ENCODE measurements at regions of chr2 and their contacts with region 1.

Region 1: DNA sequence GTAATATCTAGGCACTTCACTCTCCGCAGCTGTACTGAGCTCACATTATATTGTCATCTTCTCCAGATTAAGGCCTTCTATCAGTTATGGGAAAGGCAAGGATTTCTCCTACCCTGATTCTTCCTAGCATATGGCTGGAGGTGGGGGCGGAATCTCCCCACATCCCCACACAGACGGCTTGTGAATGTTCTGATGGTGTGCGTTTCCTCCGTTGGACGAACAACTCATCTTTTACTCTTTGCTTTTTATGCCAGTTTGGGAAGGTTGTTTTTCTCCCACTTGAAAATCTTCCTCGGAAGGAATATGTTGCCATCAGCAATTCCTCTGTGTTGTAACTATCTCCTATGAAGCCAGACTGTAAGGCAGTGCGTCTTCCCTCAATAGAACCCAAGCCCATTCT is 24.3 kb downstream of the KLHL29 start:
- DNase-seq: no peak
- H3K4me3 ChIP-seq: no peak overlapping the region
- H3K27ac ChIP-seq: no peak overlapping the region
- H3K4me1 ChIP-seq: no peaks in the 10 kb centered on the region
- H3K27me3 ChIP-seq: no peaks in the 10 kb centered on the region
- CTCF ChIP-seq: no peak
- EP300 ChIP-seq: no peak
- POLR2A ChIP-seq: no peak

Region 2: DNA sequence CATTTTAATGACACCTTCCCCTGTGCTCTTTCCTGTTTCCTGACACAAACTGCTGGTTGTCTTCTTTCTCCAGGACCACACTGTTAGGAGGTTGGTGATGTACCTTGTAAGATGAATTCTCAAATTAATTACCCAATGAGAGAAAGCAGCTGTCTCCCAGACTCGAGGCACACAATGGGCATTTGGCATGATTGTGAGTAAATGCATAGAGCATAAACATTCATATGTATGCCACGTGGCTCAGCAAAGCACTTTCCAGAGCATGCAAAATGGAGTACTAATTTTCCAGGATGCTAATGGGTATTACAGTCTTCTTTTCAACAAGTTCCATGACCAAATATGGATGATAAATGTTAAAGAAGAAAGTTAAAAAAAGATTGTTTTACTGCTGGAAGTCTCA is 259.5 kb before region 1 on chr2:
- intact Hi-C with region 1: loop called in 1 of 4 experiments (anchors 5 kb)
- DNase-seq: no peak
- H3K4me3 ChIP-seq: no peak overlapping the region
- H3K27ac ChIP-seq: no peak overlapping the region
- H3K4me1 ChIP-seq: no peaks in the 10 kb centered on the region
- H3K27me3 ChIP-seq: no peaks in the 10 kb centered on the region
- CTCF ChIP-seq: no peak
- EP300 ChIP-seq: no peak
- POLR2A ChIP-seq: no peak

Measured in ovary (tissue), 10 donors.